ENCODE measurements at regions of chr20 and their contacts with region 1.

Region 1: DNA sequence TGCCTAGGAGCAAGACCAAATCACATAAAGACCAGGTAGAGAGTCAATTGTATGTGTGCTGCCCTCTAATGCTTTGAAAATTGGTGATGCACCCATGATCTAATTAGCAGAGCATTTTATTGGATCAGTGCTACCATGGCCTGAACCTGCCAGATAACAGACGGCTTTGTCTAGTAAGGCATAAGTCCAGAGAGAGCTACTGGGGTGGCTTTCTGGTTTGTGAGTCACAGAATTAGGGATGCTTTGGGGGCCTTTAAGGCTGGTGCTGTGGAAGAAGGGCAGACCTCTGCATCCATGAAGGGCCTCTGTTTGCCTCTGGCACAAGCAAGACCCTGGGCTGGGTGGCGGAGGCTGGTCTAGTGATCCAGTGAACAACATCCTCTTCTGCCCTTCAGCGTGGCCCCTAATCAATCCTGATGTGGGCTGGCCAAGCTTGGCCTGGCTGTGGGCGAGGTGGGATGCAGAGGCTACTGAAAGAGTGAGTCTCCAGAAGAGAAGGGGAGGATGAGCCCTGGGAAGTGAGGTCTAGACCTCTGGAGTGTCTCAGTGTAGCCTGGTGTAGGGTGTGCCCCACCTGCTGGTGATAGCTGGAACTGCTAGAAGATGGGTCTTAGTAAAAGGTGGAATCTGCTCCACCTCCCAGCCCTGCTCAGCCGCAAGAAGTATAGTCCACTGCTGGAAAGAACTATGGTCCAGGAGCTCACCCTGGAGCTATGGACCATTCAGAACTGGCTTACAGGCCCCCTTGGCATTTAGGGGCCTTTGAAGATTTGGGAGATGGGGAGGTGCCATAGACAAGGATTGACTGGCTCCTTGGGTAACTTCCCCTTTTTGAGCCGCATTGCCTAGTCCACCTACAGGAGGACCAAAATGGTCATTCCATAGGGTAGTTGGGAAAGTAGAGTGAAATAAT is 36.7 kb upstream of the AAR2 start:
- DNase-seq: peak; percentile 53 to 79
- H3K4me3 ChIP-seq: no peak overlapping the region
- H3K27ac ChIP-seq: no peak overlapping the region
- H3K4me1 ChIP-seq: no peaks in the 10 kb centered on the region
- H3K27me3 ChIP-seq: no peaks in the 10 kb centered on the region
- CTCF ChIP-seq: peak; percentile 94

Region 2: GRCh38 chr20:35994994-35995453 is 204.6 kb before region 1 on chr20:
- CTCF ChIA-PET with region 1: interaction called, 8 read pairs
- POLR2A ChIA-PET with region 1: no interaction called
- intact Hi-C with region 1: loop called (anchors 1 kb)
- DNase-seq: peak; percentile 69 to 89
- H3K4me3 ChIP-seq: no peak overlapping the region
- H3K27ac ChIP-seq: no peak overlapping the region
- H3K4me1 ChIP-seq: no peaks in the 10 kb centered on the region
- H3K27me3 ChIP-seq: no peaks in the 10 kb centered on the region
- CTCF ChIP-seq: peak; percentile 88

Region 3: DNA sequence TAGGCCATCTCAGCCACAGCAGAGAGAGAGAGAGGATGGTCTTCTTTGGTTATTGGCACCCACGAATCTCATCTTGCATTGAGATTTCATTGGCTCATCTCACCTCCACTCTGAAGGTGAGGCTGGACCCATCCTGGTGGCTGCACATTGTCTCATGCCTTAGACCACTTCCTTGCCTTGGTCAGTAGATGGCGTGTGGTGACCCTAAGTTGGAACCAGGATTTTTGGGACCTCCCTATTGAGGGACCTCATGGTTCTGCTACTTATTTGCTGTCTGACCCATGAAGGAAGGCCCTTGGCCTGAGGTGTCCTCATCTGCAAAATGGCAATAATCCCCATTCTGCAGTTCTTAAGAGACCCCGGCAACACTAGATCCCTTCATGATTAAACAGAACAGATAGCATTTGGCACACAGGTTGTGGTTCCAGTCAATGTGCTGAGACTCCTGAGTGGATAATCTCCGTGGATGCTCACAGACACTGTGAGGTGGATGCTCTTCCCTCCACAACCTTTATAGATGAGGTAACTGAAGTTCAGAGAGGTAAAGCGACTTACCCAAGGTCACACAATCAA is 15.2 kb after region 1 on chr20:
- CTCF ChIA-PET with region 1: interaction called, 10 read pairs
- POLR2A ChIA-PET with region 1: no interaction called
- intact Hi-C with region 1: no loop called
- DNase-seq: no peak
- H3K4me3 ChIP-seq: no peak overlapping the region
- H3K27ac ChIP-seq: no peak overlapping the region
- H3K4me1 ChIP-seq: no peaks in the 10 kb centered on the region
- H3K27me3 ChIP-seq: no peaks in the 10 kb centered on the region
- CTCF ChIP-seq: peak; percentile 72

Region 4: DNA sequence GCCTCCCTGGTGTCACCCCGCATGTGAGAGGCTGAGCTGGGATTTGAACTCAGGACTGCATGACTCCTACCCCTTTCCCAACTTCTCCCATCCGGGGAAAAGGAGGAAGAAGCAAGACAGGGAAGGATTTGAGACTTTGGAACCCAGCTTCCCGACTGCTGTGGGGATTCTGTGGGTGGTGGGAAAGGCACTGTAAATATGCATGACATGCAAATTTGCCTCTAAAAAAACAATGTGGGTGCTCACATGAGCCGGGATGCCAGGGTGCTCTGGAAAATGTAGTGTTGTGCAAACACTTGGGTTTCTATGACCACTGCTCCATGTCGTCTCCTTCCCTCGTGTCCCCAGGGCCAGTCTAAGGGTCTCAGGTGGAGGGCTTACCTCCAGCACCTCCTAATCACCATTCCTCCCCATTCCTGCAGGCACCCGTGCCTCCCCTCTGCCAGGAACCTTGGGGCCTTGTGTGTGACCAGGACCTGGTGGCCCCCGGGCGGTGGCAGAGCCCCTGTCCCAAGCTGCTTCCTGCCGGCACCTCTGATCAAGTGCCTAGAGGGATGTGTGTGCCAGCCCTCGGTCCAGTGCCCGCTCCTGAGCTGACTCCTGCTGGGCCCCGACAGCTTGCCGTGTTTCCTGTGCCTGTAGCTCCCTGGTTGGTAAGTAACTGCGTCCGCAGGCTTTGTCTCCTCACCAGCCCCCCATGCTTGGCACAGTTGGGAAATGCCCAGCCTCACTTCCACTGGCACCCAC is 167.2 kb after region 1 on chr20:
- CTCF ChIA-PET with region 1: interaction called, 12 read pairs
- POLR2A ChIA-PET with region 1: no interaction called
- intact Hi-C with region 1: no loop called
- DNase-seq: no peak
- H3K4me3 ChIP-seq: no peak overlapping the region
- H3K27ac ChIP-seq: no peak overlapping the region
- H3K4me1 ChIP-seq: no peaks in the 10 kb centered on the region
- H3K27me3 ChIP-seq: peaks cover 36% of the 10 kb centered on the region
- CTCF ChIP-seq: no peak

Region 5: DNA sequence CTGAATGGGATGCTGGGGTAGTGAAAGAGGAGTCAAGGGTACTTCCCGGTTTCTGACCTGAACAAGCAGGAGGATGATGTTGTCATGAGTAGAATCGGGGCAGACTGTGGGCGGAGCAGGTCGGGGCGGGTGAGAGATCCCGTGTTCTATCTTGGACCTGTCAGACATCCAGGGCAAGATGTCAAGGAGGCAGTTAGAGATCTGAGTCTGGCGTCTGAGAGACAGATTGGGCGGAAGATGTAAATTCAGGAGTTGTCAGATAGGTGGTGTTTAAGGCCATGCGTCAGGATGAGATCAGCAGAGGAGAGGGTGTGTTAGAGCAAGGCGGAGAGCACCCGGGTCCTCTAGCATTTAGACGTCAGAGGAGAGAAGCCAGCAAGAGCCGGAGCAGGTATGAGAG is 222.0 kb after region 1 on chr20:
- CTCF ChIA-PET with region 1: no interaction called
- POLR2A ChIA-PET with region 1: no interaction called
- intact Hi-C with region 1: no loop called
- DNase-seq: no peak
- H3K4me3 ChIP-seq: no peak overlapping the region
- H3K27ac ChIP-seq: no peak overlapping the region
- H3K4me1 ChIP-seq: no peaks in the 10 kb centered on the region
- H3K27me3 ChIP-seq: peaks cover 32% of the 10 kb centered on the region
- CTCF ChIP-seq: no peak

Region 6: DNA sequence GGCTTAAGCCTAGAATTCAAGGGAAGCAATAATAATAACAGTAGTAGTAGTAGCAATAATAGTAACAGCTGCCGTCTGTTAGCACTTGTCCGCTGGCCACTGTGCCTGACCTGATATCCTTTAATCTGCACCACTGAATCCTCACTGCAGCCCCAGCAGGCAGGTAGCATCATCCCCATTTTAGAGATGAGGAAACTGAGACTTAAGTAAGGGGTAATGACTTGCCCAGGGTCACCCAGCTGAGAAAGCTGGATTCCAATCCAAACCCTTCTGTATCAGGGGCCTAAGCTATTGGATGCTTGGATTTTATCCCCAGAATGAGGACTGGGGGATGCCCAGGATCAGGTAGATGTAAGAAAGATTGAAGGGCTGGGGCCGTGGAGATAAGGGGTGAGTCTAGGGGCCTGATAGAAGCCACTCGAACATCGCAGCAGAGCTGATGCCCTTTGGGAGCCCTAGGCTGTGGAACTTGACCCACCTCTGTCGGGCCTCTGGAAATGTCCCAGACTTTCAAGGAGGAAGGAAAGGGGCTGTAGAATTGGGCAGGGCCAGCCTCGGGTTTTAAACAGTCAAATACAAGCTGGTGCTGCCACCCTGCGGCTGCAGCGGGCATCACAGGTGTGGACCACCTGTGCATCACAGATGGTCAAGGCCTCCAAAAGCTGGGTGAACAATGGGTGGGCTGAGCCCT is 239.6 kb after region 1 on chr20:
- CTCF ChIA-PET with region 1: interaction called, 11 read pairs
- POLR2A ChIA-PET with region 1: no interaction called
- intact Hi-C with region 1: no loop called
- DNase-seq: peak in 1 of 2 experiments; percentile 76
- H3K4me3 ChIP-seq: no peak overlapping the region
- H3K27ac ChIP-seq: no peak overlapping the region
- H3K4me1 ChIP-seq: no peaks in the 10 kb centered on the region
- H3K27me3 ChIP-seq: no peaks in the 10 kb centered on the region
- CTCF ChIP-seq: peak; percentile 95

Measured in PC-9 (cell line).